ENCODE measurements at regions of chr6 and their contacts with region 1.

Region 1: GRCh38 chr6:160431226-160431625 is 83.0 kb downstream of the SLC22A3 start:
- DNase-seq: peak; percentile 53 to 60
- ATAC-seq: peak; percentile 61 to 89 (median 80)
- H3K4me3 ChIP-seq: no peak overlapping the region
- H3K27ac ChIP-seq: peak overlapping the region in 8 of 10 donors; percentile 15 to 75 (median 64)
- H3K4me1 ChIP-seq: peaks cover 0 to 48% (median 33%) of the 10 kb centered on the region in 9 donors
- H3K27me3 ChIP-seq: peaks cover 0 to 12% (median 0%) of the 10 kb centered on the region in 7 donors
- CTCF ChIP-seq: no peak

Region 2: GRCh38 chr6:160221423-160221822 is 209.8 kb before region 1 on chr6:
- intact Hi-C with region 1: loop called in 1 of 10 experiments (anchors 10 kb)
- DNase-seq: no peak
- ATAC-seq: no peak
- H3K4me3 ChIP-seq: no peak overlapping the region
- H3K27ac ChIP-seq: no peak overlapping the region
- H3K4me1 ChIP-seq: peaks cover 0 to 5% (median 0%) of the 10 kb centered on the region in 9 donors
- H3K27me3 ChIP-seq: peaks cover 0 to 23% (median 0%) of the 10 kb centered on the region in 7 donors
- CTCF ChIP-seq: peak in 1 of 9 donors; percentile 17

Region 3: DNA sequence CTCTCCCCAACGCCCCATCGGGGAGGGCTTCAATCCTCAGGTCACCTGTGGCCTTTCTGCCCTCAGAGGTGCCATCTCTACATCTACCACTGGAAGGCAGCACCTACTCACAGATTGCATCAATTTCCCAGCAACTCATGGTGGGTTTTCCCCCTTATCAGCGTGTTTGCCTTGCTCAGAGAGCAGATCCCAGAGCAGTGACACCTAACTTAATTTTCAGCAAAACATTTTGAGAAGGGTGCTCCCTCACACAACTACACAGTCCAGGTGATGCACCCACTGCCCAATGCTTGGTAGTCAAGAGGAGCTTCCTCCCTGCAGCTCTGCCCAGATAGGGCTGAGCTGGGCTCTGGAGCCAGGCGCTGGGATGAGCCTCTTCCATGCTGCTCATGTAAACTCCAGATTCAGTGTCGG is 319.1 kb after region 1 on chr6:
- intact Hi-C with region 1: no loop called
- DNase-seq: no peak
- ATAC-seq: no peak
- H3K4me3 ChIP-seq: no peak overlapping the region
- H3K27ac ChIP-seq: no peak overlapping the region
- H3K4me1 ChIP-seq: no peaks in the 10 kb centered on the region
- H3K27me3 ChIP-seq: peaks cover 0 to 31% (median 6%) of the 10 kb centered on the region in 7 donors
- CTCF ChIP-seq: peak in 3 of 9 donors; percentile 16 to 25 (median 19)